ENCODE measurements at regions of chr1 and their contacts with region 1.

Region 1: GRCh38 chr1:155598842-155599331 is 11.1 kb upstream of the MSTO1 start:
- DNase-seq: no peak
- H3K4me3 ChIP-seq: no peak overlapping the region
- H3K27ac ChIP-seq: no peak overlapping the region
- H3K4me1 ChIP-seq: no peaks in the 10 kb centered on the region
- H3K27me3 ChIP-seq: no peaks in the 10 kb centered on the region
- CTCF ChIP-seq: no peak

Region 2: DNA sequence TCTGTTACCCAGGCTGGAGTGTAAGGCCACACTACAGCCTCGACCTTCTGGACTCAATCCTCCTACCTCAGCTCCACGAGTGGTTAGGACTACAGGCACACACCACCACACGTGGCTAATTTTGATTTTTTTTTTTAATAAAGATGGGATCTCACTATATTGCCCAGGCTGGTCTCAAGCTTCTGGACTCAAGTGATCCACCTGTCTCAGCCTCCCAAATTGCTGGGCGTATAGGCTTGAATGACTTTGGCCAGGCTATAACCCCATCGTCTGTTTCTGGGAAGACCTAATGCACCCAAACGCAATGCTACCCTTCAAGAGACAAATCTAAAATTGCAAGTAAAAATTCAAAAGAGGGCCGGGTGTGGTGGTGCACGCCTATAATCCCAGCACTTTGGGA is 142.1 kb after region 1 on chr1:
- CTCF ChIA-PET with region 1: no interaction called
- POLR2A ChIA-PET with region 1: interaction called, 14 read pairs
- intact Hi-C with region 1: no loop called
- DNase-seq: no peak
- H3K4me3 ChIP-seq: no peak overlapping the region
- H3K27ac ChIP-seq: no peak overlapping the region
- H3K4me1 ChIP-seq: no peaks in the 10 kb centered on the region
- H3K27me3 ChIP-seq: no peaks in the 10 kb centered on the region
- CTCF ChIP-seq: no peak

Measured in PC-9 (cell line).